T-cell (primary cell): ENCODE measurements at regions of chr3 and their contacts with region 1.

Region 1: GRCh38 chr3:21835264-21835663 is 84.3 kb upstream of the ZNF385D start:
- DNase-seq: no peak
- ATAC-seq: no peak
- H3K4me3 ChIP-seq: no peak overlapping the region
- H3K4me3 Mint-ChIP-seq: no peak overlapping the region
- H3K27ac ChIP-seq: no peak overlapping the region
- H3K27ac Mint-ChIP-seq: no peak overlapping the region
- H3K4me1 ChIP-seq: no peaks in the 10 kb centered on the region
- H3K4me1 Mint-ChIP-seq: no peaks in the 10 kb centered on the region
- H3K27me3 ChIP-seq: no peaks in the 10 kb centered on the region
- H3K27me3 Mint-ChIP-seq: no peaks in the 10 kb centered on the region

Region 2: DNA sequence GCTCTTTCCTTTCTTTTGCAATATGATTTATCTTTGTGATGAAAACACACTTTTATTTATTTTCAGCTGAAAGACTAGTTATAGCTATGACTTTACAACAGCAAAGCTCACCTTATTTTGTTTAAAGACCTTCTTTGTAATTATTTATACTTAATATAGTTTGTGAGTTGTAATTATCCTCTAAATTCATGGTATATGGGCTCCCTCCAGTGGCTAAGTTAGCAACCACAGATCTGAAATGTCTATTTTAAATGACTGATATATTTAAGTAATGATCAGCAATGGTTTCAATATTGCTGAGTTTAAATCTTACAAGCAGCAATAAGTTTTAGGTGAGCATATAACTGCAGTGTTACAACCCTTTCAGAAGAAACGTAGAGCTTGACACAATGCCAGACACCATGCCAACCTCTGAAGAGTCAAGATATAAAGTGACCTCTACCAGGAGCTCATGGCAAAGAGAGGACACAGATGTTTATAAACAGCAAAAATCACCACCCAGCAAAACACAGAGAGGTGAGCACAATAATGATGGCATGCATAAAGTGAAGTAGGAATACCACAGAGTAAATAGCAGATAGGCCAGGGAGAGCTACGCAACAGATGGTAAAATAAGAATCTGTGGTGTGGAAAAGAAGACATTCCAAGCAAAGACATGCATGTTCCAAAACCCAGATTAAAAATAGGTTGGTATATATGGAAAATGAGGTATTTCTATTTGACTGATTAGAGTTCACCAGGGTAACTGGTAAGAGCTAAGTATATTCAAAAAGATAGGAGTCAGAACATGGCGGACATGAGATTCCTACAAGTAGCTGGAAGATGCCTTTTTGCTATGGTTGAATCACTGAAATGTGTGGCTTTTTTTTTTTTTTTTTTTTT is 59.4 kb after region 1 on chr3:
- CTCF ChIA-PET with region 1: no interaction called
- POLR2A ChIA-PET with region 1: interaction called in 1 of 2 experiments, 12 read pairs
- DNase-seq: no peak
- ATAC-seq: no peak
- H3K4me3 ChIP-seq: no peak overlapping the region
- H3K4me3 Mint-ChIP-seq: no peak overlapping the region
- H3K27ac ChIP-seq: no peak overlapping the region
- H3K27ac Mint-ChIP-seq: no peak overlapping the region
- H3K4me1 ChIP-seq: no peaks in the 10 kb centered on the region
- H3K4me1 Mint-ChIP-seq: no peaks in the 10 kb centered on the region
- H3K27me3 ChIP-seq: no peaks in the 10 kb centered on the region
- H3K27me3 Mint-ChIP-seq: no peaks in the 10 kb centered on the region

Region 3: GRCh38 chr3:22620498-22620897 is 785.2 kb after region 1 on chr3:
- CTCF ChIA-PET with region 1: no interaction called
- POLR2A ChIA-PET with region 1: no interaction called
- DNase-seq: no peak
- ATAC-seq: no peak
- H3K4me3 ChIP-seq: no peak overlapping the region
- H3K4me3 Mint-ChIP-seq: no peak overlapping the region
- H3K27ac ChIP-seq: no peak overlapping the region
- H3K27ac Mint-ChIP-seq: no peak overlapping the region
- H3K4me1 ChIP-seq: no peaks in the 10 kb centered on the region
- H3K4me1 Mint-ChIP-seq: no peaks in the 10 kb centered on the region
- H3K27me3 ChIP-seq: no peaks in the 10 kb centered on the region
- H3K27me3 Mint-ChIP-seq: no peaks in the 10 kb centered on the region